Kidney (tissue), 22 donors: ENCODE measurements at regions of chr9 and their contacts with region 1.

Region 1: DNA sequence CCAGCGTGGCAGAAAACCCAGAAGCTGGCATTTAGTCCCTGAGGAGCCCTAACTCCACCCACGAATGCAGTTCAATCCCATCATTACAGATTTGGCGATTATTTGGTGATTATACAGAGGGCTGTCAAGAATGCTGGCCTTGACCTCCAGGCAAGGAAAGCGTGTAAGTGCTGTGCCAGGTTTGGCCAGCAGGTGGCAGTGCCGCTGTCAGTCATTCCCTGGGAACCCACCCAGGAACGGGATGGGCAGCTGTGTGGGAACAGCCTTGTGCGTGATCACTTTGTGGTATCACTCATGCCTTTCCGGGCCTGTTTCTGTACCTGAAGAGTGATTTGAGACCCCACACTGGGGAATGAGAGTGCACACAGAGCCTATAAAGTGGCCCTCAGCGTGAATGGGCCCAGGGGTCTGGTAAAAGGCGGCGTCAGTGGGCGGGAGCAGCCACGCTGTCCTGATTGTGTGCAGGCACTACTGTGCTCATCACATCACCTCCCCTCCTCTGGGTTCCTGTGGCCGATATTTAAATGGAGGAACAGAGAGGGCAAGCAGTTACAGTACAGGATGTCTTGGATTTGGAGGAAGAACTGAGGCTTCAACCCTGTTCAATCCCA is 215.6 kb downstream of the ROR2 start:
- DNase-seq: peak; percentile 62 to 85 (median 76)
- H3K4me3 ChIP-seq: no peak overlapping the region
- H3K27ac ChIP-seq: no peak overlapping the region
- H3K4me1 ChIP-seq: no peaks in the 10 kb centered on the region
- H3K27me3 ChIP-seq: no peaks in the 10 kb centered on the region
- CTCF ChIP-seq: peak; percentile 83

Region 2: DNA sequence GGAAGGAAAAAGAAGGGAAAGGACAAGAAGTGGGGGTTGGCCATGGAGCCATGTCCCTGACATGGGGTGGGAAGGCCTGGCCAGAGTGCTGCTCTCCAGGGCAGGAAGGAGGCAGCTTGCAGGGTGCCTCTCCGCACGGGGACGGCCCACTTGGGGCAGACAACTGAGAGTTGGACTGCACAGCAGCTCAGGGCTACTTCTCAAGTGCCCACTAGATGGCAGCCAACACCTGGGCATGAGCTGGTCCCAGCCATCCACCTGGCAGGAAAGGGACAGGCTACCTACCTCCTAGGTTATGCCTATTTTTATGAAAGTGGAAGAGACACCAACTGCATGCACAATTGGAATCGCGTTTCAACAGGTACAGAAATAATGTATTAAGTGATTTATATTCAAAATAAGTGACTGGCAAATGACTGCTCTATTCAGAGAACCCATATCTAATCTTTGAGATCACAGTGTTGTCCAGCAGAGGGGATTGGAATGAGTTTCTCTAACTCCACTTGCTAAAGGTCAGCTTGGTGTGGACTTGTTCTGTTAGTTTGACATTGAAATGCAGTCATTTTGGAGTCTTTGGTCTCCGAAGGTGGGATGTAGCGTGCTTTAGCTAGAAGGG is 819.5 kb before region 1 on chr9:
- intact Hi-C with region 1: loop called (anchors 10 kb)
- DNase-seq: peak; percentile 81 to 88 (median 85)
- H3K4me3 ChIP-seq: no peak overlapping the region
- H3K27ac ChIP-seq: no peak overlapping the region
- H3K4me1 ChIP-seq: peaks cover 0 to 2% (median 0%) of the 10 kb centered on the region in 3 donors
- H3K27me3 ChIP-seq: no peaks in the 10 kb centered on the region
- CTCF ChIP-seq: peak; percentile 82

Region 3: GRCh38 chr9:91795598-91796241 is 61.2 kb after region 1 on chr9:
- intact Hi-C with region 1: no loop called
- DNase-seq: peak in 2 of 5 donors; percentile 79 to 83
- H3K4me3 ChIP-seq: no peak overlapping the region
- H3K27ac ChIP-seq: no peak overlapping the region
- H3K4me1 ChIP-seq: no peaks in the 10 kb centered on the region
- H3K27me3 ChIP-seq: no peaks in the 10 kb centered on the region
- CTCF ChIP-seq: no peak

Region 4: GRCh38 chr9:91837981-91838731 is 103.7 kb after region 1 on chr9:
- intact Hi-C with region 1: no loop called
- DNase-seq: peak in 4 of 5 donors; percentile 45 to 83 (median 65)
- H3K4me3 ChIP-seq: no peak overlapping the region
- H3K27ac ChIP-seq: no peak overlapping the region
- H3K4me1 ChIP-seq: peaks cover 0 to under 1% (median 0%) of the 10 kb centered on the region in 3 donors
- H3K27me3 ChIP-seq: no peaks in the 10 kb centered on the region
- CTCF ChIP-seq: no peak